PC-3 (cell line): ENCODE measurements at regions of chr1 and their contacts with region 1.

Region 1: GRCh38 chr1:213286235-213286634 is 235.2 kb downstream of the RPS6KC1 start:
- DNase-seq: peak; percentile 23
- ATAC-seq: no peak
- H3K4me3 ChIP-seq: no peak overlapping the region
- H3K27ac ChIP-seq: no peak overlapping the region
- H3K4me1 ChIP-seq: peaks cover 13% of the 10 kb centered on the region; the same call in 1 of the 2 replicates
- H3K27me3 ChIP-seq: no peaks in the 10 kb centered on the region
- CTCF ChIP-seq: peak; percentile 73

Region 2: DNA sequence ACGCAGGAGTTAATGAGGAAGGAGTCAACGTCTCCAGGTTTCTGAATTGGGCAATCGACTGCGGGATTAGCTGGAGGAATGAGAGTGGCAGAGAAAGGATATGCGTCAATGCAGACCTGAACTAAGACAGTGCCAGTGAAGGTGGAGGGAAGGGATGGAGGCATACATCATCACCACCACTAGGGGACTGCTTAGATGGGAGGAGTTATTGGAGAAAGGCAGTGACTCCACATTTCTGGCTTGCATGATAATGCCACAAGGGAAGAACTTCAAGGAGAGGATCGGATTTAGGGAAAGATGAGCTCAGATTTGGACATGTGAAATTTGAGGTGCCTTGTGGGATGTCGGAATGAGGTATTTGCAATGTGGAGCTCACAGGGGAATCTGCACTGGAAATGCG is 318.4 kb before region 1 on chr1:
- CTCF ChIA-PET with region 1: no interaction called
- POLR2A ChIA-PET with region 1: no interaction called
- intact Hi-C with region 1: no loop called
- DNase-seq: peak; percentile 69
- ATAC-seq: peak; percentile 90
- H3K4me3 ChIP-seq: no peak overlapping the region
- H3K27ac ChIP-seq: no peak overlapping the region
- H3K4me1 ChIP-seq: 0 out of 2 replicates have a peak, but pooled peaks cover 2% of the 10 kb centered on the region
- H3K27me3 ChIP-seq: no peaks in the 10 kb centered on the region
- CTCF ChIP-seq: peak; percentile 75

Region 3: GRCh38 chr1:213110349-213111300 is 175.6 kb before region 1 on chr1:
- CTCF ChIA-PET with region 1: no interaction called
- POLR2A ChIA-PET with region 1: no interaction called
- intact Hi-C with region 1: no loop called
- DNase-seq: no peak
- ATAC-seq: peak; percentile 59
- H3K4me3 ChIP-seq: no peak overlapping the region
- H3K27ac ChIP-seq: no peak overlapping the region
- H3K4me1 ChIP-seq: no peaks in the 10 kb centered on the region
- H3K27me3 ChIP-seq: no peaks in the 10 kb centered on the region
- CTCF ChIP-seq: no peak

Region 4: DNA sequence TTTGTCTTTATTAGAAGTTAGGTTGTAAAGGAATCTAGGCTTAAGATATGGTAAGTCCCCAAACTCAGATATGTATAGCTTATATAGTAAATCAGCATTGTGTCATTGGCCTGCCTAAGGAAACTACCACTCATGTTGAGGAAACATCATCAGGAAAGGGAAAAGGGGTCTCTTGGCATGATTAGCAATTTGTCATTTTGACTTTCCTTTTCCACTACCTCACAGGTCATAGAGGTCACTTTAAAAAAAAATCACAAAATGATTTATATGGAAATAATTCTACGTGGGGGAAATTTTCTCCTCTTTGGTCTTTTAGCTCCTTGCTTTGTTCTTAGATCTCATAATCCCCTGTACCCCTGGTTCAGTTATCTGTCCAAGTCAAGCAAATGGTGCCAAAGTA is 21.7 kb before region 1 on chr1:
- CTCF ChIA-PET with region 1: no interaction called
- POLR2A ChIA-PET with region 1: no interaction called
- intact Hi-C with region 1: loop called (anchors 2 kb)
- DNase-seq: no peak
- ATAC-seq: no peak
- H3K4me3 ChIP-seq: no peak overlapping the region
- H3K27ac ChIP-seq: no peak overlapping the region
- H3K4me1 ChIP-seq: no peaks in the 10 kb centered on the region
- H3K27me3 ChIP-seq: no peaks in the 10 kb centered on the region
- CTCF ChIP-seq: no peak

Region 5: GRCh38 chr1:213366141-213366831 is 80.1 kb after region 1 on chr1:
- CTCF ChIA-PET with region 1: no interaction called
- POLR2A ChIA-PET with region 1: no interaction called
- intact Hi-C with region 1: no loop called
- DNase-seq: no peak
- ATAC-seq: no peak
- H3K4me3 ChIP-seq: no peak overlapping the region
- H3K27ac ChIP-seq: no peak overlapping the region
- H3K4me1 ChIP-seq: no peaks in the 10 kb centered on the region
- H3K27me3 ChIP-seq: peaks cover 54% of the 10 kb centered on the region
- CTCF ChIP-seq: no peak